A673 (cell line): ENCODE measurements at regions of chr14 and their contacts with region 1.

Region 1: DNA sequence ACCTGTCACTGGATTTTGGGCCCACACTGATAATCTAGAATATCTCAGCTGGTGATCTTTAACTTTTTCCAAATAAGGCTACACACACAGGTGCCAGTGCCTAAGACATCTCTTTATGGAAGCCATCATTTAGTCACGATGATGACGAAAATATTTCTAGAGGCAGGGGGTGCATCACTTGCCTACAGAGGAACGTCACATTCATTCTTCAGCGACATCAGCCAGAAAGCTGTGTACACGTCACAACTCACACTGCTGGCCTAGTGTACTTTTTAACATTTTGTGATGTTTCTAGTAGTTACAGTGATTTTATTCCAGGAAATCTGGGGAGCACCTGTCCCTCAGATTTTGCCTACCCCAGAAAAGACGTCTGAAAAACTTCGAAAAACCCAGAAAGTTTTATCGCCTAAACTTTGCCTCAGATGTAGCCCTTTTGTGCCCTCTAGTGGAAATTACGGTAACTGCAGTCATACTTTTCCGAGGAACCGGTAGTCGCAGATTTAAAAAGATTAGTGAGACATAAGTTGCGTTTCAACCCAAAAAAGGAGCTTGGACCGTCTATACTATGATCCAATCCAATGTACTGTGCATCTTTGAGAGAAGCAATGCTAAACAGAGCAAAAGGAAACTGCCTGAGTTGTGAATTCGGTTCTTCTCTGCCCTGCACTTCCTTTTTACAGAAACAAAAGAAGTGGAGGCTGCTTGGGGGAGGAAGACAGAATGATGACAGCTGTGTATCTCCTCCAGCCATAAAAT is 64.3 kb upstream of the STON2 start:
- DNase-seq: peak; percentile 79
- H3K4me3 ChIP-seq: peak overlapping the region; percentile 41
- H3K27ac ChIP-seq: peak overlapping the region; percentile 64
- H3K4me1 ChIP-seq: no peaks in the 10 kb centered on the region
- H3K27me3 ChIP-seq: no peaks in the 10 kb centered on the region
- CTCF ChIP-seq: peak; percentile 90

Region 2: DNA sequence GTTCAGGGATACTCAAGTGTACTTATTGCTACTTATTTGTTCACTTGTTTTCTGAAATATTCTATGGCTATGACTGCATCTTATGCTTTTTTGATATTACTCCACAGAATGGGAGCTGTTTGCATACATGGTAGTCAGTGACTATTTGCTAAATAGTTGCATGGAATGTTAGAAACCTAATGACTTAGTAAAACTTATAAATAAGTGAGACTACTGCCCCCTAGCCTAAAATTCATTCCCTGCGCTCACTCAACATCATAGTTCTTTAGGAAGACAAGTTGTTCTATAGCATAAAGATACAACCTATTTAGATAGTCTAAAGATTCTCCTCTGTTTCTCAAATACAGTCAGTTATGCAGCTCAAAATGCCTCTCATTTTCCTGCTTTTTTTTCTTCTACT is 828.4 kb before region 1 on chr14:
- CTCF ChIA-PET with region 1: no interaction called
- POLR2A ChIA-PET with region 1: no interaction called
- intact Hi-C with region 1: no loop called
- DNase-seq: no peak
- H3K4me3 ChIP-seq: no peak overlapping the region
- H3K27ac ChIP-seq: no peak overlapping the region
- H3K4me1 ChIP-seq: no peaks in the 10 kb centered on the region
- H3K27me3 ChIP-seq: no peaks in the 10 kb centered on the region
- CTCF ChIP-seq: peak; percentile 43; the same call in 1 of the 2 replicates

Region 3: GRCh38 chr14:80926397-80927074 is 537.9 kb before region 1 on chr14:
- CTCF ChIA-PET with region 1: no interaction called
- POLR2A ChIA-PET with region 1: no interaction called
- intact Hi-C with region 1: no loop called
- DNase-seq: no peak
- H3K4me3 ChIP-seq: no peak overlapping the region
- H3K27ac ChIP-seq: no peak overlapping the region
- H3K4me1 ChIP-seq: peaks cover 3% of the 10 kb centered on the region
- H3K27me3 ChIP-seq: no peaks in the 10 kb centered on the region
- CTCF ChIP-seq: no peak

Region 4: GRCh38 chr14:80954687-80955299 is 509.6 kb before region 1 on chr14:
- CTCF ChIA-PET with region 1: no interaction called
- POLR2A ChIA-PET with region 1: no interaction called
- intact Hi-C with region 1: loop called (anchors 10 kb)
- DNase-seq: peak; percentile 83
- H3K4me3 ChIP-seq: peak overlapping the region; percentile 45
- H3K27ac ChIP-seq: no peak overlapping the region
- H3K4me1 ChIP-seq: no peaks in the 10 kb centered on the region
- H3K27me3 ChIP-seq: peaks cover 73% of the 10 kb centered on the region
- CTCF ChIP-seq: peak; percentile 79

Region 5: DNA sequence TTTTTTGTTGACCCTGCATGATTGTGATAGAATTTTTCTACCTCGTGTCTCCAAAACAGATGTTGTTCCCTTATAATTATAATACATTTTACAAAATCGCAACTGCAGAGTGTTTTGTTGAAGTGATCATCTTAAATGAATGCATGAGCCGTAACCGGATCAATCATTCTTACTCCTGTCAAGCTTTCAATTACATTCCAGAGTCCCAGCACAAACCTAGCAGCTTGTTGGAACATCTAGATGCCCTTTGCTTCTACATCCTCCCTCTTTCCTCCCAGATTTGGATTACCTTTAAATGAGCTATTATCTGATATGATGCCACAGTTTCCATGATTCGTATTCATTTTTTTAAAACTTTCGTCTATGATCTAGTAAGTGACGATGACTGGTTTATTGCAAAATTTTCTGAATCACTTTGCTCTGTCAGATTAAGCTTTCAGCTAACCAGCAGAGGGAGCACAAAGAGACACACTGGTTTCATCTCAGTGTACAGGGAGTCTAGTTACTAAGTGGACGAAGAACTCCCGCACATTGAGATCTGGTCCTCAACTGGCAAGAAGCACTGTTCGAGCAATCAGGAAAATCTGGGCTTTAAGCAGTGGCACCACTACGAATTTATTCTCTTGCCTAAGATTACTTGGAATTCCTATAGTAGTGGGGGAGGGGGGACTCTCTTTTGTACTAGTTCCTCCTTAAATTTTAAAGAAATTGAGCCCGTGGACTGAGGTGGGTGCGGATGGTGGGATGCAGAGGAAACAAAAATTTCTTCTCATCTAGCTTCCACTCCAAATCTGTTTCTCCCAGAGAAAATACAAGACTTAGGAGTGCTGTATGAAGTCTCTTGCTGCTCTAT is 468.1 kb before region 1 on chr14:
- CTCF ChIA-PET with region 1: no interaction called
- POLR2A ChIA-PET with region 1: no interaction called
- intact Hi-C with region 1: loop called (anchors 2 kb)
- DNase-seq: peak; percentile 81
- H3K4me3 ChIP-seq: no peak overlapping the region
- H3K27ac ChIP-seq: no peak overlapping the region
- H3K4me1 ChIP-seq: no peaks in the 10 kb centered on the region
- H3K27me3 ChIP-seq: peaks cover 25% of the 10 kb centered on the region
- CTCF ChIP-seq: peak; percentile 78

Region 6: DNA sequence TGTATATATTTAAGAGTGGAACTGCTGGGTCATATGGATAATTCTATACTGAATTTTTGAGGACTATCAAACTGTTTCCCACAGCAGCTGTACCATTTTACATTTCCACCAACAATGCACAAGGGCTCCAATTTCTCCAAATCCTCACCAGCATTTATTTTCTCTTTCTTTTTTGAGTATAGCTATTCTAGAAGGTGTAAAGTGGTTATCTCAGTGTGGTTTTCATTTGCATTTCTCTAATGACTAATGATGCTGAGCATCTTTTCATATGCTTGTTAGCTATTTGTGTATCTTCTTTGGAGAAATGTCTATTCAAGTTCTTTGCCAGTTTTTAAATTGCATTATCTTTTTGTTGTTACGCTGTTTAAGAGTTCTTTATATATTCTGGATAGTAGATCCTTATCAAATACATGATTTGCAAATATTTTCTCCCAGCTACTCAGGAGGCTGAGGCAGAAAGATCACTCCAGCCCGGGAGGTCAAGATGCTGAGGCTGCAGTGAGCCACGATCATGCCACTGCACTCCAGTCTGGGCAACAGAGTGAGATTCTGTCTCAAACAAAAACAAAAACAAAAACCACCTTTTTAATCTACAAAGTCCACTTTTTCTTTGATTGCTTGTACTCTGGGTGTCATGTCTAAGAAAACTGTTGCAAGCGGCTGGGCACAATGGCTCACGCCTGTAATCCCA is 276.4 kb before region 1 on chr14:
- CTCF ChIA-PET with region 1: no interaction called
- POLR2A ChIA-PET with region 1: no interaction called
- intact Hi-C with region 1: loop called (anchors 10 kb)
- DNase-seq: no peak
- H3K4me3 ChIP-seq: no peak overlapping the region
- H3K27ac ChIP-seq: no peak overlapping the region
- H3K4me1 ChIP-seq: peaks cover 4% of the 10 kb centered on the region
- H3K27me3 ChIP-seq: no peaks in the 10 kb centered on the region
- CTCF ChIP-seq: no peak

Region 7: DNA sequence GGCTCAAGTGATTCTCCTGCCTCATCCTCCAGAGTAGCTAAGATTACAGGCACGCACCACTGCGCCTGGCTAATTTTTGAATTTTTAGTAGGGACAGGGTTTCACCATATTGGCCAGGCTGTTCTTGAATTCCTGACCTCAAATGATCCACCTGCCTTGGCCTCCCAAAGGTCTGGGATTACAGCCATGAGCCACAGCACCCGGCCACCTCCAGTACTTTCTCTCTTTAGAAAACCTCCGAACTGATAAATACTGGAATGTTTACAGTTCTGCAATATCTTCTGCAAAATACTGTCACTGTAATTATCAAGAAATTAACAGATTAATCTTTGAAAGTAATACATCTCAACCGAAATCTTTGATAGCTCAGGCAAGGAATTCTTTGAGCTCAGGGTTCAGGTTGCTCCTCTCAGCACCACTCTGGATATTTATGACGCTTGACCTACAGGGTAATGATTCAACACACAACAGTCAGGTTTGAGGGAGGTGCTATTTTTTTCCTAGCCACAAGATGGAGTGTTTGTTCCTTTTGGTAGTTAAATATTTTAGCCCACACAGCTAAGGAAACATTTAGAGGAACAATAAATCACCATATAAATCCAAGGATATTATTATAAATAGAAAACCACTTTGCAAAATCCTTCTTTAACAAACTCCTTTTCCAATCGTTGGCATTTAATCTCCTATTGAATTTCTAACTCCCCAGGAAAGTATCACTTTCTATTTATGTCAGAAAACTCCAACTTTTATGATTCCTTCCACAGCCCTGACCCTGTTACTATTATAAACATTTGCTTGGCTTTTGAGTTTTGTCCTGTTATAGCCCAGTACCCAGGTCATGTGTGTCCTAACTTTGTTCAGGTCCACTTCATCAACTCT is 195.1 kb before region 1 on chr14:
- CTCF ChIA-PET with region 1: interaction called, 7 read pairs
- POLR2A ChIA-PET with region 1: no interaction called
- intact Hi-C with region 1: loop called (anchors 1 kb)
- DNase-seq: peak; percentile 69
- H3K4me3 ChIP-seq: no peak overlapping the region
- H3K27ac ChIP-seq: no peak overlapping the region
- H3K4me1 ChIP-seq: no peaks in the 10 kb centered on the region
- H3K27me3 ChIP-seq: no peaks in the 10 kb centered on the region
- CTCF ChIP-seq: peak; percentile 75